Left cardiac atrium (tissue), 4 donors: ENCODE measurements at regions of chr10 and their contacts with region 1.

Region 1: DNA sequence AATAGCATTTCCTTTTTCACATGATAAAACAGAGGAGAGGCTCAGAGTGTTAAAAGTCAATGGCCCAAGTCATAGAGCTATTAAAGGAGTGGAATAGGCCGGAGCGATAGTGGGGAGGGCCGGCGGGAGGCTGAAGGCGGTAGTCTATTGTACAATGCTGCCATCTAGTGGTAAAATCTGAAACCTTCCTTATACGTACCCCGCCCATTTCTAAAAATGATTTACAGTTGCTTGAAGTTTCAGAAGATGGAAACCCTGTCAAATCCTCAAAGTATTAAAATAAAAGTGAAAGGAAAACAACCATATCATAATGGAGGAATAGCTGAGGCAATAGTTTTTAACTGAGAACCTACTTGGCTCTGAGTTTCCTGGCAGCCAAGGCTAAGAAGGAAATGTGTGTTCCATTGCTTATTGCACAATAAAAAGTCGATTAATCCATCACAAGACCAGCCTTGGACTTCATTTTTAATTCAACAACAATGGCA is 209.1 kb downstream of the CCSER2 start:
- DNase-seq: peak; percentile 68
- ATAC-seq: peak; percentile 84 to 92

Region 2: DNA sequence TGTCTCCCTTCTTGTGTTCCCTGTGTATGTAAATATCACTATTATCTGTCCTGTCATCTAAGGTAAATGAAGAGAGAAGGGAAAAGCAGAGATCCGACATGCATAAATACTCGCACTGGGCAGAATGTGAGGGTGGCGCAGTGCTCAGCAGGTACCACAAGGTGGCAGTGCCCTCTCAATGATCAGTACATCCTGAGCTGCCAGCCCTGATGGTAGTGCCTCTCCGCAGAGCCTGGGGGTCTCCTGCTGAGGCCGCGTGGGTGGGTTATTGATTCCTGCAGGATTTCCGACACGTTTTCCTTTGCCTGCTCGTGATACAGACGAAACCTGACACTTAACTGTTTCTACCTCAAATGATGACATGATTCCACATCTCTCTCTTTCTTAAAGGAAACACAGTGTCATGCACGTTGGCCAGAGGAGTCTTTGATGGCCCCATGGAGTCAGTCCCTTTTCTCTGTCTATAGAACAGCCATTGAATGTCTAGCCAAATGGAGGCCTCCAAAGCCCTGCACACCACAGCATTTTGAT is 272.8 kb before region 1 on chr10:
- intact Hi-C with region 1: loop called (anchors 2 kb)
- DNase-seq: peak; percentile 67
- ATAC-seq: peak; percentile 90 to 94

Region 3: GRCh38 chr10:84375011-84375410 is 162.5 kb before region 1 on chr10:
- intact Hi-C with region 1: loop called (anchors 1 to 5 kb)
- DNase-seq: no peak
- ATAC-seq: no peak